Left cardiac atrium (tissue), 4 donors: ENCODE measurements at regions of chr9 and their contacts with region 1.

Region 1: DNA sequence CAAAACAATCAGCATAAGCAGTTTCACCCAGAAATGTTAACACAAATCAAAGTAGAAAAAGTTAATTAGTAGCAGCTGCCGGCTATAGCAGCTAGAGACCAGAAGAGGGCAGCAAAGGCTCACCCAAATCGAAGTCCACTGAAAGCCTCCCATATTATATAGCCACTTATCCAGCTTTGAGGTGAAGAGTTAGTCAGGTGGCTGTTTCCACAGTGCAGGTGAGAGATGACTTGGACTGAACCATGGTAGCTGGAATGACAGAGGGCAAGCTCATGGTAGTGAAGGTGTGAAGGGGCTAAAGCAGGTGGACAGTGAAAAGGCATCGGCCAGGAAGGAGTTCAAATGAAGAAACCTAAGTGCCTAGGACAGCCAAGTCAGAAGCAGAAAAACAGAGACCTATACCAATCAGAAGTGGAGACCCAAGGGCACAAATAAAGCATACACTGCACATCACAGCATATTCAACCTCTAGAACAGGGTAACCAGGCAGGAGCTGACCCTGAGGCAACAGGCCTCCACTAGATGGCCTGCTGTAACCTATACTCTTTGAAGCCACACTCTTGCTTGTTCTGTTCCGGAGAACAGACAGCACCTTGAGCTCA is 7.2 kb upstream of the RNF38 start:
- DNase-seq: peak; percentile 46
- ATAC-seq: peak; percentile 72 to 84

Region 2: GRCh38 chr9:36450110-36450732 is 43.0 kb after region 1 on chr9:
- intact Hi-C with region 1: loop called (anchors 2 to 5 kb)
- DNase-seq: no peak
- ATAC-seq: no peak

Region 3: DNA sequence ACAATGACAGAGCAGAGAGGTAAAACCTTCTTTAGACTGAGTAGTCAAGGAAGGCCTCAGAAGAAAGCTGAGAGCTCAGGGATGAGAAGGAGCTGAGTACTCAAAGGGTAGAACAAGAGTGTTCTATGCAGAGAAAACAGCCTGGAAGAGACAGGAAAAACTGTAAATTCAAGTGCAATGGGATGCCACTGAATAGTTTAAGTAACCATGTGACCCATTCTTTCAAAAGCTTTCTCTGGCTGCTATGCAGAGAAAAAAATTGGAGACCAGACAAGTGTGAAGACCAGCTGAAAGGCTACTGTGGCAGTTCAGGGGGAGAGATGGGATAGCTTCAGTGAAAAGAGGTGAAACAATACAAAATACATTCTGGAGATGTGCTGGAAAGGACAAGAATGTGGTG is 54.1 kb after region 1 on chr9:
- intact Hi-C with region 1: no loop called
- DNase-seq: no peak
- ATAC-seq: peak in 1 of 2 donors; percentile 53

Region 4: DNA sequence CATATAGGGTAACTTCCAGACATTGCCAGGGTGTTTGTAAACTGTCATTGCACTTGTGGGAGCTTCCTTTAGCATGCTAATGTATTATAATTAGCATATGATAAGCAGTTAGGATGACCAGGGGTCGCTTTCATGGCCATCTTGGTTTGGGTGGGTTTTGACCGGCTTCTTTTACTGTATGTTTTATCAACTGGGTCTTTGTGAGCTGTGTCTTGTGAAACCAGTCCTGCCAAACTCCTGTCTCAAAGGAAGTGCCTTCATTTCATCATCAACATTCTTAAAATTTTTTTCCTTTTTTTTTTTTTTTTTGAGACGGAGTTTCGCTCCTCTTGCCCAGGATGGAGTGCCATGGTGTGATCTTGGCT is 153.6 kb after region 1 on chr9:
- intact Hi-C with region 1: loop called (anchors 1 to 5 kb)
- DNase-seq: no peak
- ATAC-seq: no peak